Posterior cingulate gyrus (tissue), 11 donors: ENCODE measurements at regions of chr14 and their contacts with region 1.

Region 1: DNA sequence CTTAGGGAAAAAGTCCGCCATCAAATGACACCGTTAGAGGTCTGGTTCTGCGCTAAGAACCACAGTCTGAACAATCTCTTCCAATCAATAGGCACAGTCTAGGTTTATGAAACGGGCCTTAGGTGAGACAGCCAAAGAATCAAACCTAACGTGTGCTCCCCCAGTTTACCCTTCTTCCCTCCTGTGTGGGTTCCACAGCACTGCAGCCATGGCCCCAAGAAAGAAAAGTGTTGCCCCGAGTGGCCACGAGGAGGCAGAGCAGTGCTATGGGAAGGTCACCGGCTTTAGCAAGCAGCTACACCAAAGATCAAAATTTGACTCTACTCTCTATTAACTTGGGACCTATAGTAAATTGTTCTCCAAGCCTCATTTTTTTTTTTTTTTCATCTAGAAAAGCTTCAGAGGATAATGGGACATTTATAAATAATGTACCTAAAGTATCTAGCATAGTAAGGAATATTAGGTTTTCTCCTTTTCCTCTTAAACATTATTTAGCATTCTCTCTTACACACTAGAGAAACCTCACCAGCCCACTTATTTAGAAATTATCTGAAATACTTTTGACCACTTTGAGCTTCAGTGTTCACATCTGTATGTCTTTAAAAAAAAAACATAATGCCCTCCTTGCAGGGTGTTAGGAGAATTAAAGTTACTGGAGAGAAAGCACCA is 70.2 kb upstream of the GPHB5 start:
- DNase-seq: peak in 9 of 10 donors; percentile 19 to 94 (median 67)

Region 2: GRCh38 chr14:63454863-63455622 is 66.1 kb after region 1 on chr14:
- intact Hi-C with region 1: no loop called
- DNase-seq: no peak

Region 3: DNA sequence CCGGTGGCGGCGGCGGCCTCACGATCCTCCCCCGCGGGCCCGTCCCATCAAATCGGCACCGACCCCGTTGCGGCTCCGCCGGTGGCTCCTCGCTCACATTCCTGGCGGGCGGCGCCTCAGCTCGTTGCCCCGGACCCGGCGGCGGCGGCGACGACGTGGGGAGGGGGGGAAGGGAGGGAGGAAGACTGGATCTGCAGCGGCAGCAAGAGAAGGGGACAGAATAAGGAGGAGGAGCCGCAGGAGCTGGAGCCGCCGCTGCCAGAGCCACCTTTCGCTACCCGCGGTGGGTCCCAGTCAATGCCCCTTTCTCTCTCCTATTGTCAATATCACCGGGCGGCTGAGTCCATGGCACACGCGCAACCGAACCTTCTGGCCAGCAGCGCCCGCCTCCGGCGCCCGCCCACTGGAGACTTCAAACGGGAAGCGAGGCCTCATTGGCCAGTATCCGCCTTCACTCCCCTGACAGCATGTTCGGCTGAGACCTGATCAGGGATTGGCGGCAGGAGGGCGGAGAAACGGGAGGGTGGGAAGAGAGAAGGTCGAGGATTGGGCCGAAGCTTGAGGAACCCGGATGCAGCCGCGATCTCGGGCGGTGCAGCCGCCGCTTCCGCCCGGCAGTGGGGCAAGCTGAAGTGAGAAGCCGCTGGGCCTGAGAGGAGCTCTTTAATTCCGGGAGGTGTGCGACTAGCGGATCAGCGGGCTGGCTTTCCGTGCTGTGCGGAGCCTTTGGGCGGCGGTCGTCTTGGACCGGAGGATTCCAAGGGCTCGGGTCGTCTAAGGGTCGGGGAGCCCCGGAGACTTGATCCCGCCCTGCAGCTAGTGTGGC is 154.3 kb after region 1 on chr14 and contains the start of gene PPP2R5E:
- intact Hi-C with region 1: loop called (anchors 1 kb)
- DNase-seq: peak; percentile 97 to 100 (median 98)

Region 4: GRCh38 chr14:63632932-63633514 is 244.1 kb after region 1 on chr14:
- intact Hi-C with region 1: loop called (anchors 5 kb)
- DNase-seq: no peak